Panc1 (cell line): ENCODE measurements at regions of chrX and their contacts with region 1.

Region 1: GRCh38 chrX:153957252-153957651 is 12.8 kb upstream of the RENBP start:
- DNase-seq: no peak
- ATAC-seq: no peak
- H3K4me3 ChIP-seq: no peak overlapping the region
- H3K27ac ChIP-seq: no peak overlapping the region
- H3K4me1 ChIP-seq: no peaks in the 10 kb centered on the region
- H3K27me3 ChIP-seq: no peaks in the 10 kb centered on the region
- CTCF ChIP-seq: no peak

Region 2: DNA sequence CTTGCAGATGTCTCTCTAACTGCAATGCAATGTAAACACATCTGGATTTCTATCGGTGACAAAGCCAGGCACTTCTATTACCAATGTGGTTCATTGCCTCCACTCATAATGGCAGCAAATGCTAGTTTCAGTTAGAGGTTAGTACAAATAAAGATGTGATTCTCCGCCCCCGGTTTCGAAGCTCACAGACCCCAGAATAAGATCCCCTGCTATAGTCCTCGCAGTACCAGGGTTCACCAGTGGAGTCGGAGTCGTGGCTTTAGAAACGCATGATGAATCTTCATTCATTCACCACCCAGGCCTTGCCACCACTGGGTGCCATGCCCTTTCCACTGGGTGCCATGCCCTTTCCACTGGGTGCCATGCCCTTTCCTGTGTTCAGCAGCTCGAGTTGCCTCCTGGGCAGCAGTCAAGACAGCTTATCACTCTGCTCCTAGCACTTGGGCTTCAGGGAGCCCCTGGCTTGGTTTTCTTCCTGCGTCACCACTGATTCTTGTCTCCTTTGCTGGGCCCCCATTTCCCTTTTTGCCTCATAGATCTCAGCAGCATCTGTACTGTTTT is 18.9 kb before region 1 on chrX:
- CTCF ChIA-PET with region 1: no interaction called
- POLR2A ChIA-PET with region 1: interaction called, 12 read pairs
- in situ Hi-C with region 1: no loop called
- intact Hi-C with region 1: no loop called
- DNase-seq: no peak
- ATAC-seq: no peak
- H3K4me3 ChIP-seq: no peak overlapping the region
- H3K27ac ChIP-seq: no peak overlapping the region
- H3K4me1 ChIP-seq: peaks cover 12% of the 10 kb centered on the region
- H3K27me3 ChIP-seq: no peaks in the 10 kb centered on the region
- CTCF ChIP-seq: no peak